Endothelial cell of umbilical vein (primary cell): ENCODE measurements at regions of chr7 and their contacts with region 1.

Region 1: GRCh38 chr7:21507626-21508343 is 35.1 kb upstream of the DNAH11 start:
- DNase-seq: peak; percentile 52
- H3K4me3 ChIP-seq: no peak overlapping the region
- H3K27ac ChIP-seq: no peak overlapping the region
- H3K4me1 ChIP-seq: no peaks in the 10 kb centered on the region
- H3K27me3 ChIP-seq: no peaks in the 10 kb centered on the region
- CTCF ChIP-seq: peak; percentile 76
- POLR2A ChIP-seq: no peak

Region 2: GRCh38 chr7:20778063-20778721 is 729.6 kb before region 1 on chr7:
- CTCF ChIA-PET with region 1: interaction called, 5 read pairs
- POLR2A ChIA-PET with region 1: no interaction called
- dilution Hi-C with region 1: no loop called
- intact Hi-C with region 1: loop called (anchors 1 kb)
- DNase-seq: peak; percentile 30
- H3K4me3 ChIP-seq: peak overlapping the region in 2 of 3 experiments; percentile 30 to 46
- H3K27ac ChIP-seq: no peak overlapping the region
- H3K4me1 ChIP-seq: peaks cover 5% of the 10 kb centered on the region
- H3K27me3 ChIP-seq: peaks cover 54 to 86% of the 10 kb centered on the region in 2 experiments
- CTCF ChIP-seq: peak; percentile 72 to 78
- POLR2A ChIP-seq: no peak

Region 3: DNA sequence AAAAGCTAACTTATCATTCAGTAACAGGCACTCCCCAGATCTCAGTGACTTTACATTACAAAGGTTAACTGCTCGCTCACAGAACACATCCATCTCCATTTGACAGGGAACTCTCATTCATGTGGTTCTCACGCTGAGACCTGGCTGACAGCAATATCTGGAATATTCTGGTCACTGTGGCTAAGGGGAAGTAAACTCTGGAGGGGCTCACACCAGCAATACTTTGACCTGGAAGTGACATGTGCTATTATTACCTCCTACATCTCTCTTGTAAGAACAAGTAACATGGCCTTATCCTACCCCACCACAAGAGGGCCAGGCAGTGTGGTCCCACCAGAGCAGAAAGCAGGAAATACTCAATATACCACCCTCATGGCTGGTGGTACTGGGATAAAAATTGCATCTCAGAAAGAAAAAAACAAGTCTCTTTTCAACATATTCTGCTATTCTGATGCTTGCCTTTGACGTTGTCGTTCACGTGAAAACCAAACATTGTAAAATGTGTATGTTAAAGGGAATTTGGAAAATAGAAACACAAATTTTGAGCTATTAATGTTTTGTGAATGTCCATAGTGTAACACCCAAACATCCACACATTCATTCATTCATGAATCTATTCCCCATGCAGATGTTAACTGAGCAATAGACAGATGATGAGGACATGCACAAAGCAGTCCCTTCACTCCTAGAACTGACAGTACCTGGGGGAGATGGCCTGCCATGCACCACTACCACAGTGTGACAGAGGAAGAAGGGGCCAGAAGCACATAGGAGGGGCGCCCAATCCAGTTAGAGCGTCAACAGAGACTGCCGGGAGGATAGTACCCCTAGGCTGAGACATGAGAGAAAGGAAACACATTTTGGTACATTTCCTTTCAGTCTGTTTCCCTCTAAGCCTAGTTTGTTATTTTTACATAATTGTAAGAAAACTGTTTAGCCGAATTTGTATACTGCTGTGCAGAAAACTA is 245.9 kb before region 1 on chr7:
- CTCF ChIA-PET with region 1: interaction called, 42 read pairs
- POLR2A ChIA-PET with region 1: no interaction called
- dilution Hi-C with region 1: no loop called
- intact Hi-C with region 1: loop called (anchors 1 kb)
- DNase-seq: peak; percentile 67
- H3K4me3 ChIP-seq: no peak overlapping the region
- H3K27ac ChIP-seq: no peak overlapping the region
- H3K4me1 ChIP-seq: peaks cover 2% of the 10 kb centered on the region
- H3K27me3 ChIP-seq: no peaks in the 10 kb centered on the region
- CTCF ChIP-seq: peak; percentile 67 to 68
- POLR2A ChIP-seq: no peak

Region 4: DNA sequence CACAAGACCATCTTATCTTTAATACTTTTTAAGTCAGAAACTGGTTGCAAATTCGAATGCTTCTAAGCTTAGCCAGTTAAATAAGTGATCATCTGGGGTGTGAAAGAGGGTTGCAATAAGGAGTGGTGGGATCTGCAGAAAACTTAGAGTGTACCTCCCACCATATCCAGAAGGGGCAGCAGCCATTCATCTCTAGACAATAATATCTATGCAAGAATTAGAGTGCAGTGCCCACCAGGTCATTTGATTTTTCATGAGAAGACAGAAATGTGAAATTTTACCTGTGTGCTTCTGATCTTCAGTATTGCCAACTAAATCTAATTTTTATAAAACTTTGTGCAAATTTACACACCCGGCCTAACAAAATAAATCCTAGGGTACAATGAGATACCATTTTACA is 207.1 kb before region 1 on chr7:
- CTCF ChIA-PET with region 1: interaction called, 3 read pairs
- POLR2A ChIA-PET with region 1: no interaction called
- dilution Hi-C with region 1: no loop called
- intact Hi-C with region 1: loop called (anchors 1 kb)
- DNase-seq: no peak
- H3K4me3 ChIP-seq: no peak overlapping the region
- H3K27ac ChIP-seq: no peak overlapping the region
- H3K4me1 ChIP-seq: peaks cover 10% of the 10 kb centered on the region
- H3K27me3 ChIP-seq: no peaks in the 10 kb centered on the region
- CTCF ChIP-seq: peak; percentile 11 to 41
- POLR2A ChIP-seq: no peak

Region 5: GRCh38 chr7:21365866-21366624 is 141.7 kb before region 1 on chr7:
- CTCF ChIA-PET with region 1: no interaction called
- POLR2A ChIA-PET with region 1: no interaction called
- dilution Hi-C with region 1: no loop called
- intact Hi-C with region 1: no loop called
- DNase-seq: peak; percentile 92
- H3K4me3 ChIP-seq: no peak overlapping the region
- H3K27ac ChIP-seq: peak overlapping the region; percentile 83
- H3K4me1 ChIP-seq: peaks cover 17% of the 10 kb centered on the region
- H3K27me3 ChIP-seq: no peaks in the 10 kb centered on the region
- CTCF ChIP-seq: no peak
- POLR2A ChIP-seq: no peak

Region 6: GRCh38 chr7:21383227-21384220 is 124.3 kb before region 1 on chr7:
- CTCF ChIA-PET with region 1: no interaction called
- POLR2A ChIA-PET with region 1: no interaction called
- dilution Hi-C with region 1: no loop called
- intact Hi-C with region 1: no loop called
- DNase-seq: no peak
- H3K4me3 ChIP-seq: no peak overlapping the region
- H3K27ac ChIP-seq: no peak overlapping the region
- H3K4me1 ChIP-seq: no peaks in the 10 kb centered on the region
- H3K27me3 ChIP-seq: no peaks in the 10 kb centered on the region
- CTCF ChIP-seq: no peak
- POLR2A ChIP-seq: no peak

Region 7: DNA sequence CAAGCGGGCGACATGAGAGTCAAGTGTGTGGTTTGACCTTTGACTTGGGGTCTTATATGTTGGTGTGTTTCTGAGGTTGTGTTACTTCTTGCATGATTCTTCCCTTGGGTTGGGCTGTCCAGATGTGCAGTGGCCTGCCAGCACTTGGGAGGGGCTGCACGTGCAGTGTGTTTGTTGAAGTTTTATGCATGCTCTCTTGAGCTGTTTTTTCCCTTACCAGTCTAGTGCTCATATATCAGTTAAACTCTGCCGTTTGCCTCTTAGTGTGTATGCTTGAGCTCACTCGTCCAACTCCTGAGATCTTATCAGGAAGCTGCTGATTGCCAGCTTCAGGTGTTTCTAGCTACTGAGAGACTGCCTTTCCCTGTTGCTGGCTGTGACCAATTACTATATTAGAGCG is 56.8 kb before region 1 on chr7:
- CTCF ChIA-PET with region 1: no interaction called
- POLR2A ChIA-PET with region 1: no interaction called
- dilution Hi-C with region 1: no loop called
- intact Hi-C with region 1: no loop called
- DNase-seq: no peak
- H3K4me3 ChIP-seq: no peak overlapping the region
- H3K27ac ChIP-seq: no peak overlapping the region
- H3K4me1 ChIP-seq: no peaks in the 10 kb centered on the region
- H3K27me3 ChIP-seq: no peaks in the 10 kb centered on the region
- CTCF ChIP-seq: no peak
- POLR2A ChIP-seq: no peak

Region 8: DNA sequence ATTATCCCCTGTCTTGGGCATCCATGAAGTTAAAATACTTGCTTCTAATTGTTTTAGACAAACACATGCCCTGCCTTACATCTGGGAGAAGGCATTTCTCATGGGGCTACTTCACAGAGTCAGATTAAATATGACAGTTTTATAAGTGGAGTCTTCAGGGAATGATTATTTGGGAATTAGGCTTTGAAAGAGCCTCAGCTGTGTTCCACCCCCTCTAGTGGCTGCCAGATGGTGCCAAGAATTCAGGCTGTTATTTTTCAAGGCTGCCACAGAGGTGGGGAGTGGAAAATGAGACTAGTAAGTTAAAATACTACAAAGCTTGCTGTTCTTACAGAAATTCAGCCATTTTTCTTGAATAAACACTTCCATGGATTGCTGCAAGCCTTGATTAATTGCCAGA is 10.7 kb before region 1 on chr7:
- CTCF ChIA-PET with region 1: interaction called, 11 read pairs
- POLR2A ChIA-PET with region 1: no interaction called
- dilution Hi-C with region 1: no loop called
- intact Hi-C with region 1: no loop called
- DNase-seq: no peak
- H3K4me3 ChIP-seq: no peak overlapping the region
- H3K27ac ChIP-seq: no peak overlapping the region
- H3K4me1 ChIP-seq: no peaks in the 10 kb centered on the region
- H3K27me3 ChIP-seq: no peaks in the 10 kb centered on the region
- CTCF ChIP-seq: peak in 1 of 2 donors; percentile 13
- POLR2A ChIP-seq: no peak

Region 9: GRCh38 chr7:21753071-21753470 is 245.3 kb after region 1 on chr7:
- CTCF ChIA-PET with region 1: no interaction called
- POLR2A ChIA-PET with region 1: no interaction called
- dilution Hi-C with region 1: no loop called
- intact Hi-C with region 1: no loop called
- DNase-seq: no peak
- H3K4me3 ChIP-seq: no peak overlapping the region
- H3K27ac ChIP-seq: no peak overlapping the region
- H3K4me1 ChIP-seq: no peaks in the 10 kb centered on the region
- H3K27me3 ChIP-seq: peaks cover 2 to 5% of the 10 kb centered on the region in 2 experiments
- CTCF ChIP-seq: no peak
- POLR2A ChIP-seq: no peak

Region 10: GRCh38 chr7:21767300-21767900 is 259.6 kb after region 1 on chr7:
- CTCF ChIA-PET with region 1: no interaction called
- POLR2A ChIA-PET with region 1: no interaction called
- dilution Hi-C with region 1: no loop called
- intact Hi-C with region 1: loop called (anchors 1 kb)
- DNase-seq: peak; percentile 60
- H3K4me3 ChIP-seq: no peak overlapping the region
- H3K27ac ChIP-seq: no peak overlapping the region
- H3K4me1 ChIP-seq: no peaks in the 10 kb centered on the region
- H3K27me3 ChIP-seq: peaks cover 8% of the 10 kb centered on the region in 2 experiments
- CTCF ChIP-seq: peak; percentile 42 to 47
- POLR2A ChIP-seq: no peak